T-cell (primary cell): ENCODE measurements at regions of chr12 and their contacts with region 1.

Region 1: DNA sequence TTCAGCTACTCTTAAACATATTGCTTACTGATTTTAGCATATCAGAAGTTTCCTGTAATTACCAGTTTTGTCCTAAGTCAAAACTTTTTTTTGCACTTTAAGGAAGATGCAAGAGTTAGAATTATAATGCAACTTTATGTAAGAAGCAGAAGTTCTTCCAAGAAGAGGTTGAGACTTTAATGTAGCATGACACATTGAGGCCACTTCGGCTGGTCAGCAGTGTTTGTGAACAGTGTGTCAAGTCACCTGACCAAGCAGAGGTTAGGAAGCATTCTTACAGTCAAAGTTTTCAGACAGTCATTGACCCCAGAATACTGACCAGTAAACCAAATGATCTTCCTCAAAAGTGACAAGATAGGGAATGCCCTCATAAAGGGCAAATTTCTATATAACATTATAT is 15.2 kb downstream of the FGFR1OP2 start:
- DNase-seq: peak in 1 of 35 experiments; percentile 9
- ATAC-seq: no peak
- H3K4me3 ChIP-seq: no peak overlapping the region
- H3K4me3 Mint-ChIP-seq: no peak overlapping the region
- H3K27ac ChIP-seq: no peak overlapping the region
- H3K27ac Mint-ChIP-seq: no peak overlapping the region
- H3K4me1 ChIP-seq: peaks cover 5 to 8% of the 10 kb centered on the region in 2 experiments
- H3K4me1 Mint-ChIP-seq: peaks cover 48 to 63% (median 56%) of the 10 kb centered on the region in 3 donors
- H3K27me3 ChIP-seq: no peaks in the 10 kb centered on the region
- H3K27me3 Mint-ChIP-seq: no peaks in the 10 kb centered on the region

Region 2: GRCh38 chr12:26172013-26172412 is 781.4 kb before region 1 on chr12:
- CTCF ChIA-PET with region 1: no interaction called
- POLR2A ChIA-PET with region 1: interaction called in 1 of 2 experiments, 13 read pairs
- DNase-seq: no peak
- ATAC-seq: no peak
- H3K4me3 ChIP-seq: no peak overlapping the region
- H3K4me3 Mint-ChIP-seq: no peak overlapping the region
- H3K27ac ChIP-seq: no peak overlapping the region
- H3K27ac Mint-ChIP-seq: no peak overlapping the region
- H3K4me1 ChIP-seq: no peaks in the 10 kb centered on the region
- H3K4me1 Mint-ChIP-seq: no peaks in the 10 kb centered on the region
- H3K27me3 ChIP-seq: peaks cover 0 to 6% of the 10 kb centered on the region in 2 experiments
- H3K27me3 Mint-ChIP-seq: peaks cover 29 to 30% of the 10 kb centered on the region in 2 donors

Region 3: DNA sequence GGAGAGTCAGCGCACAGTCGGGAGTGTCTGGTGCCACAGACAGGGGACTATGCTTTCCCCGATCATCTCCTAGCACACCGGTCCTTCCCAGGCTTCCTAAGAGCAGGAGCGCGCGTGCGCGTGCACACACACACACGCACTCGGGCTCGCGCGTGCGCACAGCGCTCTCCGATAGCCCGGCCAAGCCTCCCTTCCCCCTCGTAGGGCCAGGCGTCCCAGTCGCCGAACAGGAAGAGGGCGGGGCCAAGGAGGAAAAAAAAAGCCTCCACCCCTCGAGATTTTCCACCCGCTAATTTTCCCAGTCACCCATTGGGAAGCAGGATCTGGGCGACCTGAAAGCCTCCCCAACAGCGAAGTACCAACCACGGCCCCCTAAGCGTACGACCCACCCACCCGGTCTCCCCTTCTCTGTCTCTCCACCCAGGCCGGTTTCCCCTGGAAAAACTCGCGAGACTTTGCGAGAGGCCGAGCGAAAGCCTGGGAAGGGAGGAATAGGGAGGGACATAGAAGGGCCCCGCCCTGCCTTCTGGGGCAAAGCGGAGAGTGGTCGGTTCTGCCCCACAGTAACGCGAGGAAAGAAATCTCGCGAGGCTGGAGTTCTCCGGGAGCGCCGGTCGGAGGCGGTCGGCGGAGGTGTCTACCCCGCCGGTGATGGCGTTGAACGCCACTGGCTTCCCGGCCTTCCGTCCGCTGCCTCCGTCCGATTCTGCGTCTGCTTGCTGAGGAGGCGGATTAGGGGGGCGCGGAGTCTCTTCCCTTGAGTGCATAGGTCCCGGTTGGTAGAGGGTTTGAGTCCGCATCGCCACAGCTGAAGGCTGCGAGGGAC is 15.4 kb before region 1 on chr12 and contains the starts of genes FGFR1OP2 and INTS13:
- CTCF ChIA-PET with region 1: interaction called in 1 of 2 experiments, 3 read pairs
- POLR2A ChIA-PET with region 1: interaction called, 8 to 12 read pairs
- DNase-seq: peak; percentile 87 to 98 (median 93)
- ATAC-seq: peak; percentile 91 to 92 (median 92)
- H3K4me3 ChIP-seq: peak within 1 kb of the TSS; percentile 87 to 98
- H3K4me3 Mint-ChIP-seq: peak within 1 kb of the TSS; percentile 91 to 98 (median 95)
- H3K27ac ChIP-seq: peak within 1 kb of the TSS; percentile 88
- H3K27ac Mint-ChIP-seq: peak within 1 kb of the TSS; percentile 98 to 99
- H3K4me1 ChIP-seq: peaks cover 18 to 28% of the 10 kb centered on the region in 2 experiments
- H3K4me1 Mint-ChIP-seq: peaks cover 71 to 86% (median 73%) of the 10 kb centered on the region in 3 donors
- H3K27me3 ChIP-seq: no peaks in the 10 kb centered on the region
- H3K27me3 Mint-ChIP-seq: no peaks in the 10 kb centered on the region
- total RNA-seq, gene FGFR1OP2: 51.7 to 83.6 (median 71.3) TPM
- total RNA-seq, gene INTS13: 19.7 to 26.0 (median 23.9) TPM

Region 4: DNA sequence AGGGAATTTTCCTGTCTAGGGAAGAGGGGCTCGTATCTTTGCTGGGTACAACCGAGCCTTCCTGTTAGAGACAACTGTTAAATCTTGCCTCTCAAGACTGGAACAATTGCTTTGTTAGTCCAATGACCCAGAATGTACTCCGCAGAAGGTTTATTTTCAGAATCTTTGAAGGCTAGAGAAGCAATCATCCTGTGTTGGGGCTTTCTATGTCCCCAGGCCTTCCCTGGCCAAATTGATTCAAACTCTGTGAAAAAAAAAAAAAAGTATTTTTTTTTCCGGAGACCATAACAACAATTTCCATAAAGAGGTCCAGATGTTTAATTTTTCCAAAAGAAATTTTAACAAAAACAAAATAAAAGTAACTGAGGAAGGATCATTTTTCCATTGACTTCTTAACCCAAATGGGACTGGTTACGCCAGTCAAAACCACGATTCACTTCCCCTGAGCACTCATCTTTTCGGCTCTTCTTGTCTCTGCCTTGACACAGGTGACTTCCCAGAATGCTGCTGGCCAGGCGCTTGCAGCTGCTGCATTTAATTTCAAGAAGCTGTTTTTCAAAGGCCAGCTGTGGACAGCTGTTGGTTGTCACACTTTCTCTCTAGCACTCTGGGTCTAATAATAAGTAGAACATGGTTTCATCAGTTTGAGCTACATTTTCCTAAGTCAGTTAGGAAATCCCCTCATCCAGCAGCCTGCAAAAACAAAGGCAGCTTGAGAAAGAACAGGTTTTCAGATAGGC is 908.2 kb after region 1 on chr12:
- CTCF ChIA-PET with region 1: no interaction called
- POLR2A ChIA-PET with region 1: no interaction called
- DNase-seq: no peak
- ATAC-seq: no peak
- H3K4me3 ChIP-seq: no peak overlapping the region
- H3K4me3 Mint-ChIP-seq: no peak overlapping the region
- H3K27ac ChIP-seq: no peak overlapping the region
- H3K27ac Mint-ChIP-seq: no peak overlapping the region
- H3K4me1 ChIP-seq: no peaks in the 10 kb centered on the region
- H3K4me1 Mint-ChIP-seq: peaks cover 0 to 19% (median 0%) of the 10 kb centered on the region in 3 donors
- H3K27me3 ChIP-seq: peaks cover 0 to 6% of the 10 kb centered on the region in 2 experiments
- H3K27me3 Mint-ChIP-seq: peaks cover 2 to 19% of the 10 kb centered on the region in 2 donors